ENCODE measurements at regions of chr10 and their contacts with region 1.

Region 1: GRCh38 chr10:26357203-26357602 is 80.9 kb upstream of the APBB1IP start:
- DNase-seq: no peak
- ATAC-seq: no peak
- H3K4me3 ChIP-seq: no peak overlapping the region
- H3K27ac ChIP-seq: no peak overlapping the region
- H3K4me1 ChIP-seq: no peaks in the 10 kb centered on the region
- H3K27me3 ChIP-seq: no peaks in the 10 kb centered on the region
- CTCF ChIP-seq: no peak
- EP300 ChIP-seq: no peak
- POLR2A ChIP-seq: no peak
- RAD21 ChIP-seq: no peak

Region 2: DNA sequence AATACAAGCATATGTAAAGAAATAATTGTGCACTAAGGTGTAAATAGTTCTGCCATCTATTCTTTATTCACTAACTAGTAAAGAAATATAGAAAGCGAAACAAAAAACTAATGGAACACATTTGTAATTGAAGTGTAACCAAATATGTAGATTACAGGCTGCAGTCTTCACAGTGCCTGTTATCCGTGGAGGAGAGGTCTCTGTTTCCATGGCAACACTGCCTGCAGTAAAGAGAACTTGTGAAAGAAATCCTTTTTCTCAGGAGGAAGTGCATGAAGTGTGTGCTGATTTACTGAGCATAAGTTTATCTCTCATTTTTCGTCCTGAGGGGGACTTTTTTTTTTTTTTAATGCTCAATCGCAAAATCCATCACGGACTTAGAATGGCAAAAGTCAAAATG is 183.4 kb after region 1 on chr10:
- CTCF ChIA-PET with region 1: no interaction called
- POLR2A ChIA-PET with region 1: no interaction called
- in situ Hi-C with region 1: no loop called
- intact Hi-C with region 1: loop called (anchors 5 kb)
- DNase-seq: no peak
- ATAC-seq: no peak
- H3K4me3 ChIP-seq: no peak overlapping the region
- H3K27ac ChIP-seq: no peak overlapping the region
- H3K4me1 ChIP-seq: no peaks in the 10 kb centered on the region
- H3K27me3 ChIP-seq: peaks cover 1 to 3% of the 10 kb centered on the region in 2 experiments; a peak in 2 of 5 replicates
- CTCF ChIP-seq: no peak
- EP300 ChIP-seq: no peak
- POLR2A ChIP-seq: no peak
- RAD21 ChIP-seq: no peak

Region 3: DNA sequence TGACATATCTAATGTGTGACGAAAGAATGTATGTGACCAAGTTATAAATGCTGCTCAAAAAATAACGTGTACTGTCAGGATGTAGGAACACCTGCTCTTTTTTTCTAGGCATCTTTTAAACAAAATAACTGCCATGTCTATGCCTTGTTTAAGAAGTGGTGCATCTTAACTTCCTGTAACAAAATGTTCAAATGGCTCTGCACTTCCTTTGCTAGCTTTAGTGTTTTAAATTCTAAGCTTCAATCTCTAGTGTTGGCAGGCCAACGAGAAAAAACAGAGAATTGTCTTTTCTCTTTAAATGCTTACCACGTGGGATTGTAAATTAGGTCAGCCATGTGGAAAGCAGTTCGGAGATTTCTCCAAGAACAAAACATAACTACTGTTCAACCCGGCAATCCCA is 325.7 kb after region 1 on chr10:
- CTCF ChIA-PET with region 1: no interaction called
- POLR2A ChIA-PET with region 1: no interaction called
- in situ Hi-C with region 1: no loop called
- intact Hi-C with region 1: no loop called
- DNase-seq: no peak
- ATAC-seq: no peak
- H3K4me3 ChIP-seq: no peak overlapping the region
- H3K27ac ChIP-seq: no peak overlapping the region
- H3K4me1 ChIP-seq: no peaks in the 10 kb centered on the region
- H3K27me3 ChIP-seq: no peaks in the 10 kb centered on the region
- CTCF ChIP-seq: no peak
- EP300 ChIP-seq: no peak
- POLR2A ChIP-seq: no peak
- RAD21 ChIP-seq: no peak

Measured in HepG2 (cell line).